Sciatic nerve (tissue), 2 donors: ENCODE measurements at regions of chr2 and their contacts with region 1.

Region 1: GRCh38 chr2:237519506-237520245 is 32.6 kb downstream of the MLPH start:
- DNase-seq: no peak
- ATAC-seq: peak; percentile 37

Region 2: GRCh38 chr2:237500681-237501424 is 18.8 kb before region 1 on chr2:
- intact Hi-C with region 1: no loop called
- DNase-seq: peak; percentile 51
- ATAC-seq: no peak

Region 3: DNA sequence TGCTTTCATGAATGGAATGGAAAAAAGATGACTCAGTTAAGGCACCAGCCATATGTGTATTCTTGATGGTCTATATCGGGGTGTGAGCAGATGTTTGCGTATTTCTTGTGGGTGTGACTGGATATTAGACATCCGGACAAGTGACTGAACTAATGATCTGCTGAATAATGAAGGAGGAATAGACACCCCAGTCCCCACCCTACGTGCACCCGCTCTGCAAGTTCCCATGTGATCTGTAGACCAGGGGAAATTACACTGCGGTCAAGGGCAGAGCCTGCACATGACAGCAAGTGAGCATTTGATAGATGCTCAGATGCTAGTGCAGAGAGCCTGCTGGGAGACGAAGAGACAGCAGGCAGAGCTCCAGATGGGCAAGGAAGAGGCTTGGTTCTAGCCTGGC is 34.3 kb after region 1 on chr2:
- intact Hi-C with region 1: loop called (anchors 2 kb)
- DNase-seq: no peak
- ATAC-seq: no peak